Activated T-helper 1 cell treated with anti-CD3 and anti-CD28 coated beads, Interleukin-12 subunit alpha, Interleukin-12 subunit beta, Interleukin-2, Interleukin-4 antibody, amounts not matched to agents 30 ng/mL and 10 ng/mL and 1 ng/mL, durations not matched to agents 14 hours and 24 hours and 36 hours (primary cell): ENCODE measurements at regions of chr16 and their contacts with region 1.

Region 1: DNA sequence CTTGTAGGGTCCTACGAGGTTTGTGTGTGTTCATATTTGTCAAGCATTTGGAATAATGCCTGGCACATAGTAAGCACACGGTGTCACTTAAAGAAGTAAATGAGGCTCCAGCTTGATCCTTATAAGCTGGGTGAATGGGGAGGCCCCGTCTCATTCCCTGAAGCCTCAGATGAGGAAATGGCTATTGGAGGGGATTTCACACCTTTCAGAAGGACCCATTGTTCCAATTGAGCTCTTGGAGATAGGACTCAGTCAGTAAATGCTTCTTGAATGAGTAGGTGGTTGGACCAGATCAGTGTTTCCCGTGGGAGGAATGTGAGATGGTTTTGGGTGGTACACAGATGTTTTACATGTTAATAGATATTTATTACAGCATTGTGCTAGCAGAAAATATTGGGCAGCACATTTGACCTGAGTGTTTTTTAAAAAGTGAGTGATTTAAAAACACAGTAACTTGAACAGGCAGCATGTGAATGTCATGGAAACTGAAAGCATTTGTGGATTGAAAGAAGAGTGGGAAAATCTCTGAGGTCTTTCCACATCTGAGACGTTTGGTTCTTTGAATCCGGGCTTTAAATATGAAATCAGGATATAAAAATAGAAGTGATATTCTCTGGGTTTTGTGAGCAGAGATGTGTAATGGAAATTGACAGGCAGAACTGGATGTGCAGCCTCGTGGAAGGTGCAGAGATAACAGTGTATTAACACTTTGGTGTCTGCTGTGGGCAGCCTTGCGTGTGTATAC is 36.4 kb upstream of the ARHGAP17 start:
- DNase-seq: no peak
- H3K4me3 Mint-ChIP-seq: peak overlapping the region; percentile 57
- H3K27ac Mint-ChIP-seq: peak overlapping the region; percentile 90
- H3K4me1 Mint-ChIP-seq: peaks cover 62% of the 10 kb centered on the region
- H3K27me3 Mint-ChIP-seq: no peaks in the 10 kb centered on the region

Region 2: DNA sequence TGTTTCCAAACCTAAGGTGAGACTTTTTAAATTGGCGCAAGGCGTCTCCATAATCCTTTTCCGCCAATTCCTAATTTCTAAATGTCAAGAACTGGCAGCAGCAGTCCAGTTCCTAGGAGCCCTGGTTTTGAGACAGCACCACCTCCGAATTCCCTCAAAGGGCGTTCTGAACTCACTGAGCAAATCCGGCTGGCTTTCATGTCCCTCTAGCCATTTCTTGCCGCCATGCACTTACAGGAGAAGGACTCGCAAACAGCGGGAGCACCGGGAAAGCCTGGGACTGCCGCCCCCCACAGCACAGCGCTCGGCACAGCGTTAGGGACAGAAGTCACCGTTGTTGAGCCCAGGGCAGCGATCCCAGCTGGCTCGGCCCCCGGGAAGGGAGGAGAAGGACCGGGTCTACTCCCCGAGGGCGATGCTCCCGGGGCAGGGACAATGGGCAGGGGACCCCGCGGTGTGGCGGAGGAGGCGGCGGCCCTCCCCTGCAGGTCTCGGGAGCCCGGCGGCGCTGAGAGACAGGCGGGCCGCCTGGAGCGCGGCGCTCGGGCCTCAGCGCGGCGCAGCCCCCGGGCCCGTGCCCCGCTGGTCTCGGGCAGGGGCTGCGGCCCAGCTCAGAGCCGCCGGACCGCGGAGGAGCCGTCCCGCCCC is 37.0 kb before region 1 on chr16:
- intact Hi-C with region 1: loop called (anchors 1 kb)
- DNase-seq: no peak
- H3K4me3 Mint-ChIP-seq: peak overlapping the region; percentile 94
- H3K27ac Mint-ChIP-seq: peak overlapping the region; percentile 89
- H3K4me1 Mint-ChIP-seq: peaks cover 73% of the 10 kb centered on the region
- H3K27me3 Mint-ChIP-seq: no peaks in the 10 kb centered on the region

Region 3: GRCh38 chr16:25066747-25067631 is 15.4 kb after region 1 on chr16:
- intact Hi-C with region 1: loop called (anchors 1 kb)
- DNase-seq: peak; percentile 80
- H3K4me3 Mint-ChIP-seq: peak overlapping the region; percentile 89
- H3K27ac Mint-ChIP-seq: peak overlapping the region; percentile 88
- H3K4me1 Mint-ChIP-seq: peaks cover 40% of the 10 kb centered on the region
- H3K27me3 Mint-ChIP-seq: peaks cover 5% of the 10 kb centered on the region

Region 4: GRCh38 chr16:25093208-25094061 is 41.9 kb after region 1 on chr16:
- intact Hi-C with region 1: loop called (anchors 1 kb)
- DNase-seq: no peak
- H3K4me3 Mint-ChIP-seq: peak overlapping the region; percentile 56
- H3K27ac Mint-ChIP-seq: peak overlapping the region; percentile 77
- H3K4me1 Mint-ChIP-seq: peaks cover 25% of the 10 kb centered on the region
- H3K27me3 Mint-ChIP-seq: peaks cover 4% of the 10 kb centered on the region

Region 5: GRCh38 chr16:25126820-25127232 is 75.2 kb after region 1 on chr16:
- intact Hi-C with region 1: loop called (anchors 1 kb)
- DNase-seq: peak; percentile 6
- H3K4me3 Mint-ChIP-seq: no peak overlapping the region
- H3K27ac Mint-ChIP-seq: peak overlapping the region; percentile 80
- H3K4me1 Mint-ChIP-seq: peaks cover 29% of the 10 kb centered on the region
- H3K27me3 Mint-ChIP-seq: no peaks in the 10 kb centered on the region

Region 6: GRCh38 chr16:25224731-25225319 is 173.2 kb after region 1 on chr16:
- intact Hi-C with region 1: loop called (anchors 1 kb)
- DNase-seq: no peak
- H3K4me3 Mint-ChIP-seq: no peak overlapping the region
- H3K27ac Mint-ChIP-seq: no peak overlapping the region
- H3K4me1 Mint-ChIP-seq: no peaks in the 10 kb centered on the region
- H3K27me3 Mint-ChIP-seq: no peaks in the 10 kb centered on the region

Region 7: DNA sequence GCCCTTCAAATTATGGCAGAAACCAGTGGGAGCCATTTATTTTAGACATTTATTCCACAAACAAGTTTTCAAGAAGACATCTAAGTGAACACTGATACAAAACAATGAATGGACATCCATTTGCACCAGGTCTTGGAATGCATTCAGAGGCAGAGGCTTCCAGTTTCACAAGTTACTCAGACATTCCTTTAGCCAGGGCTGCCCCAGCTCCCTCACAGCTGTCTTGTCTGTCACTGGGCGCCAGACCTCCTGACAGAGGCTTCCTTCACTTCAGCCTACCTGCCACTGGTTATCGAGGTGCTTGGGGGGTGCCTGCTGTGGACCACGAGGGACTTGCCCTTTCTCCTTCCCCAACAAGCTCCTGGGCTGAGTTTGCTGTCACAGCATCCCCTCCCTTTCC is 184.4 kb after region 1 on chr16:
- intact Hi-C with region 1: loop called (anchors 2 kb)
- DNase-seq: no peak
- H3K4me3 Mint-ChIP-seq: no peak overlapping the region
- H3K27ac Mint-ChIP-seq: no peak overlapping the region
- H3K4me1 Mint-ChIP-seq: no peaks in the 10 kb centered on the region
- H3K27me3 Mint-ChIP-seq: no peaks in the 10 kb centered on the region